Activated CD4-positive, alpha-beta T cell treated with anti-CD3 and anti-CD28 coated beads for 36 hours (primary cell): ENCODE measurements at regions of chr14 and their contacts with region 1.

Region 1: GRCh38 chr14:92651106-92651757 is 97.2 kb downstream of the LGMN start:
- DNase-seq: peak; percentile 90
- ATAC-seq: peak; percentile 82
- H3K4me3 Mint-ChIP-seq: peak overlapping the region; percentile 90
- H3K27ac Mint-ChIP-seq: peak overlapping the region; percentile 96
- H3K4me1 Mint-ChIP-seq: peaks cover 75% of the 10 kb centered on the region
- H3K27me3 Mint-ChIP-seq: no peaks in the 10 kb centered on the region

Region 2: DNA sequence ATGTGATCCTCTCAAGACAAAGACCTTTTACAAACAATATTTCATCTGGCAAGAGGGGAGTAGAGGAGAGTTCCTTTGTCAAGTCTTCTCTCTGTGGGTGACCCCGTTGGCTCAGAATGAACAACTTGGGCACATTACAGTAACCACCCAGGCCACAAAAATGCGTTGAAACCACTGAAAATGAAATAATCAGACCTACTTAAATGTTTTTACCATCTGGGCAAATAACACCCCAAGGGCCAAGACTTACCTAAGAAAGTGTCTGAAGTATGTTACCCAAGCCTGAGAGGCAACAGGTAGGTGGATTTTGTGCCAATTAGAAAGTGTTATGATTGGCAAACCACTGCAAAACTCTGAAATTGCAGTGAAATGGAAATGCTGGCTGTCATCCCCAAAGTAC is 785.2 kb before region 1 on chr14:
- CTCF ChIA-PET with region 1: no interaction called
- POLR2A ChIA-PET with region 1: no interaction called
- intact Hi-C with region 1: loop called in 1 of 2 experiments (anchors 10 kb)
- DNase-seq: peak; percentile 66
- ATAC-seq: peak; percentile 20
- H3K4me3 Mint-ChIP-seq: peak overlapping the region; percentile 84
- H3K27ac Mint-ChIP-seq: peak overlapping the region; percentile 97
- H3K4me1 Mint-ChIP-seq: peaks cover 91% of the 10 kb centered on the region
- H3K27me3 Mint-ChIP-seq: no peaks in the 10 kb centered on the region

Region 3: DNA sequence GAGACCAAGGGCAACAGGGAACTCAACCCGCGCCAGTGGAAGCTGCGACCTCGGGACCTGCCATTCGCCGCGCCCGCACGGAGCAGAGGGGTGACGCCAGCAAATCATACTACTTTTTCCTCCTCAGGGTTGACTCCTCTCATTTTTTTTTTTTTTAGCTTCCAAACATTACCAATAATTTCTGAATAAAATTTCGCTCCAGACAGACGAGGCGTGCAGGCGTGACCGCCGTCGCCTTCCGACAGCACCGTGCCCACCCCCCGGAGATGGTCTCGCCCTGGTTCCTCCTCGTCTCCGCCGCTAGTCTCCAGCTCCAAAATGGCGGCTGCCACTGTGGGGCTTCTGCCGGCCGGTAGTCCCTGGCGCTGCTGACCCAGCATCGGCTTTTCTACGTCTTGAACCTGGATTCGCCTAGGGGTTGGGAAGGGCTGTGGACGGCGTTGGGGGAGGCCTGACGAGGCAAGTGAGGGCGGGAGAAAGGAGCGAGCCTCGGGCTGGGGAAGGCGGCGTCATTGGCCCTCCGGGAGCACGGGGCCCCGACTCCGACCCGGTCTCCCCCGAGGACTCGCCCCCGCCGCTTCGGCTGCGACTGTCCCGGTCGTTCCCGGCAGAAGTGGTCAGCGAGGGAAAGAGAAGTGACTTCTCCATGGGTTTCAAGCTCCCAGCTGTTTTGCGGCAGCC is 529.4 kb before region 1 on chr14 and contains the starts of genes CPSF2 and NDUFB1:
- CTCF ChIA-PET with region 1: interaction called, 4 read pairs
- POLR2A ChIA-PET with region 1: no interaction called
- intact Hi-C with region 1: loop called in 1 of 2 experiments (anchors 5 kb)
- DNase-seq: peak; percentile 90
- ATAC-seq: peak; percentile 92
- H3K4me3 Mint-ChIP-seq: peak within 1 kb of the TSS; percentile 77
- H3K27ac Mint-ChIP-seq: peak within 1 kb of the TSS; percentile 100
- H3K4me1 Mint-ChIP-seq: peaks cover 34% of the 10 kb centered on the region
- H3K27me3 Mint-ChIP-seq: no peaks in the 10 kb centered on the region
- total RNA-seq, gene CPSF2: 102 to 117 TPM
- total RNA-seq, gene NDUFB1: 68.9 to 118 TPM

Region 4: GRCh38 chr14:92551044-92551841 is 100.0 kb before region 1 on chr14:
- CTCF ChIA-PET with region 1: interaction called, 5 read pairs
- POLR2A ChIA-PET with region 1: no interaction called
- intact Hi-C with region 1: loop called in 1 of 2 experiments (anchors 10 kb)
- DNase-seq: no peak
- ATAC-seq: no peak
- H3K4me3 Mint-ChIP-seq: no peak overlapping the region
- H3K27ac Mint-ChIP-seq: no peak overlapping the region
- H3K4me1 Mint-ChIP-seq: peaks cover 35% of the 10 kb centered on the region
- H3K27me3 Mint-ChIP-seq: no peaks in the 10 kb centered on the region

Region 5: DNA sequence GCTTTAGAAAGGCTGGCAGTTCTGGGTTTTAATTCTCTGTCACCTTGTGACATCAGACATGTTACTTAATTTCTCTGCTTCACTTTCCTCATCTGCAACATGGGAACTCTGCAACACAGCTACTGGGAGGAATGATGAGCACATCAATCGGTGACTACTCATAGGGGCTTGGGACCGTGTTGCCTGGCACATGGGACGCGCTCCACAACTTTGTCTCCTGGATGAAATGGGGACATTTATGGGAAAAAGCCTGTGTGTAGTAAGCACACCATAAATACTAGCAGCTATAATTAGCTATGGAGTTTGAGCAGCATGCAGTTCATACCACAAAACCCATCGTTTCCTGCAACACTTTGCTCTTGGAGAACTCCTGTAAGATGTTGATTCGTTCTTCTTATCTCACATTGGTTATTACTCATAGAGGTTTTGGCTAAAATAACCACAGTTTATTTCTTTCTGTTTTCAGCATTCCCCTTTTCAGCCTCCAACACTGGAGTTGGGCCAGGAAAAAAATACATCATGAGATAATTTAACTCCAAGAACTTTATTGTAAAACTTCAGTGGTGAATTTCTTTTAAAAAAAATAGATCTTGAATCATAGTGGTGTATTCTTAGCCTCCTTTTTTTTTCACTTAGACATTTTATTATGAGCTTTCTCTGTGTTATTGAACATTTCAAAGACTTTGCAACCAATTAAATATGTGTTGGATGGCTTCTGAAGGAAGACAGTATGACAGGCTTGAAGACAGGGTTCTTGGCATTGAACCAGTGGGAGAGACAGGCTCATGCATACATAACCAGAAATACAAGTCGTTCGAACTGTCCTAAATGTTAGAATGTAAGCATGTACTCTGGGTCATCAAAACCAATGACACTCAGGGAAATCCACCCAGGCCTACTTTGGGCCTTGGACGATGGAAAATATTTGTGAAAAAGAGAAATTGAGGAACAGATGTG is 65.0 kb before region 1 on chr14:
- CTCF ChIA-PET with region 1: no interaction called
- POLR2A ChIA-PET with region 1: no interaction called
- intact Hi-C with region 1: loop called in 1 of 2 experiments (anchors 2 kb)
- DNase-seq: peak; percentile 43
- ATAC-seq: peak; percentile 79
- H3K4me3 Mint-ChIP-seq: no peak overlapping the region
- H3K27ac Mint-ChIP-seq: peak overlapping the region; percentile 68
- H3K4me1 Mint-ChIP-seq: peaks cover 85% of the 10 kb centered on the region
- H3K27me3 Mint-ChIP-seq: peaks cover 2% of the 10 kb centered on the region

Region 6: DNA sequence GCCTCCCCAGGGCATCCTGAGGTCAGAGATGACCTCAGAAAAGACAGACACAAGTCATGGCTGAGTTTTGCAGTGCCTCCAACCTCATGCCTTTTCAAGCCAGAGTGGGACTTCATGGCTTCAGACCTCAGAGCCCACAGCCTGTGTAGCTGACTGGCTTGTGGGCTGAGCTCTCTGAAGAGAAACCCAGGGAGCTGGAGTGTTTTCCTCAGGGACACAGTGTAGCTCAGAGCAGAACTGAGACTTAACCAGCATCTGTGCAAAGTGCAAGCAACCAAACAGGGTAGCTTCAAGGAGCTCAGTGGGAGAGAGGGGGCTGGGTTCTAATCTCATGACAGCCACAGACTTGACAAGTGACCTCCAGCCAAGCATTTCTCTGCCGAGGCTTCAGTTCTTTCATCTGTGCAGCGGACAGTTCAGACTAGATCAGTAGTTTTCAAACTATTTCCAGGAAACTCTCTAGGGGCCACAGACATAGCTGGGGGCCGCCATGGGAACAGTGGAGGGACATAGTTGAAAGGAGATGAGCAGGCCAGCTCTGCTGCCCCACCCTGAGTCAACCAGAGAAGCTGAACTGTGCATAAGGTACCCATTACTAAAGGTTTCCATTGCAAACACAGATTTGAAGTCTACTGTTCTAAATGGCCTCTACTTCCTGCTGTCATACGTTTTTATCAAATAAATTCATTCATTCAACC is 17.2 kb after region 1 on chr14:
- CTCF ChIA-PET with region 1: interaction called, 9 read pairs
- POLR2A ChIA-PET with region 1: interaction called, 4 read pairs
- intact Hi-C with region 1: loop called in 1 of 2 experiments (anchors 2 kb)
- DNase-seq: peak; percentile 64
- ATAC-seq: peak; percentile 82
- H3K4me3 Mint-ChIP-seq: no peak overlapping the region
- H3K27ac Mint-ChIP-seq: peak overlapping the region; percentile 78
- H3K4me1 Mint-ChIP-seq: peaks cover 77% of the 10 kb centered on the region
- H3K27me3 Mint-ChIP-seq: no peaks in the 10 kb centered on the region

Region 7: GRCh38 chr14:93212432-93212831 is 561.2 kb after region 1 on chr14:
- CTCF ChIA-PET with region 1: no interaction called
- POLR2A ChIA-PET with region 1: no interaction called
- intact Hi-C with region 1: no loop called
- DNase-seq: no peak
- ATAC-seq: no peak
- H3K4me3 Mint-ChIP-seq: no peak overlapping the region
- H3K27ac Mint-ChIP-seq: no peak overlapping the region
- H3K4me1 Mint-ChIP-seq: peaks cover 17% of the 10 kb centered on the region
- H3K27me3 Mint-ChIP-seq: no peaks in the 10 kb centered on the region